IMR-90 (cell line): ENCODE measurements at regions of chr10 and their contacts with region 1.

Region 1: DNA sequence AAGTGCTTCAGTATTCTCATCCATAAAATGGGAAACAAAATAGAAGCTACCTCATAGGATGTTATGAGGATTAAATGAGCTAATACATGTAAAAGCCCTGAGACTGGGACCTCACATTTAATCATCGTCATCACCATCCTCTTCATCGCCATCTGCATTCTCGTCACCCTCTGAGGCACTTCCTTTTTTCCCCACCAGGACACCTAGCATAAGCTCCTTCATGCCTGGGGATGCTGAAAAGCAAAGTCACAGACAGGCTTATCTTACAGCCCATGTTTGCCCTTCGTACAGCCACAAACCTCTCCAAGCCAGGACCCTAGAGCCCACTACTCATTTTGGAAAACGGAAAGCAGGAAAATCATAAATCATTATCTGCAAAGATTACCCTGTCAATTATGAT is 249.6 kb downstream of the GPAM start:
- DNase-seq: no peak
- ATAC-seq: no peak
- H3K4me3 ChIP-seq: no peak overlapping the region
- H3K27ac ChIP-seq: no peak overlapping the region
- H3K4me1 ChIP-seq: no peaks in the 10 kb centered on the region
- H3K27me3 ChIP-seq: no peaks in the 10 kb centered on the region
- CTCF ChIP-seq: no peak
- POLR2A ChIP-seq: no peak
- RAD21 ChIP-seq: no peak

Region 2: GRCh38 chr10:111410740-111411139 is 523.2 kb before region 1 on chr10:
- CTCF ChIA-PET with region 1: no interaction called
- POLR2A ChIA-PET with region 1: no interaction called
- dilution Hi-C with region 1: no loop called
- in situ Hi-C with region 1: no loop called
- intact Hi-C with region 1: no loop called
- DNase-seq: no peak
- ATAC-seq: no peak
- H3K4me3 ChIP-seq: no peak overlapping the region
- H3K27ac ChIP-seq: no peak overlapping the region
- H3K4me1 ChIP-seq: no peaks in the 10 kb centered on the region
- H3K27me3 ChIP-seq: no peaks in the 10 kb centered on the region
- CTCF ChIP-seq: no peak
- POLR2A ChIP-seq: no peak
- RAD21 ChIP-seq: no peak

Region 3: GRCh38 chr10:111656066-111656465 is 277.9 kb before region 1 on chr10:
- CTCF ChIA-PET with region 1: no interaction called
- POLR2A ChIA-PET with region 1: no interaction called
- dilution Hi-C with region 1: no loop called
- in situ Hi-C with region 1: no loop called
- intact Hi-C with region 1: no loop called
- DNase-seq: no peak
- ATAC-seq: no peak
- H3K4me3 ChIP-seq: no peak overlapping the region
- H3K27ac ChIP-seq: no peak overlapping the region
- H3K4me1 ChIP-seq: no peaks in the 10 kb centered on the region
- H3K27me3 ChIP-seq: no peaks in the 10 kb centered on the region
- CTCF ChIP-seq: no peak
- POLR2A ChIP-seq: no peak
- RAD21 ChIP-seq: no peak

Region 4: GRCh38 chr10:111879969-111880368 is 53.9 kb before region 1 on chr10:
- CTCF ChIA-PET with region 1: no interaction called
- POLR2A ChIA-PET with region 1: no interaction called
- dilution Hi-C with region 1: no loop called
- in situ Hi-C with region 1: no loop called
- intact Hi-C with region 1: no loop called
- DNase-seq: no peak
- ATAC-seq: no peak
- H3K4me3 ChIP-seq: no peak overlapping the region
- H3K27ac ChIP-seq: no peak overlapping the region
- H3K4me1 ChIP-seq: no peaks in the 10 kb centered on the region
- H3K27me3 ChIP-seq: no peaks in the 10 kb centered on the region
- CTCF ChIP-seq: no peak
- POLR2A ChIP-seq: no peak
- RAD21 ChIP-seq: no peak

Region 5: GRCh38 chr10:111890046-111890445 is 43.9 kb before region 1 on chr10:
- CTCF ChIA-PET with region 1: no interaction called
- POLR2A ChIA-PET with region 1: no interaction called
- dilution Hi-C with region 1: no loop called
- in situ Hi-C with region 1: no loop called
- intact Hi-C with region 1: loop called (anchors 1 kb)
- DNase-seq: no peak
- ATAC-seq: no peak
- H3K4me3 ChIP-seq: no peak overlapping the region
- H3K27ac ChIP-seq: no peak overlapping the region
- H3K4me1 ChIP-seq: no peaks in the 10 kb centered on the region
- H3K27me3 ChIP-seq: no peaks in the 10 kb centered on the region
- CTCF ChIP-seq: no peak
- POLR2A ChIP-seq: no peak
- RAD21 ChIP-seq: no peak